Sigmoid colon (tissue), 7 donors: ENCODE measurements at regions of chr3 and their contacts with region 1.

Region 1: DNA sequence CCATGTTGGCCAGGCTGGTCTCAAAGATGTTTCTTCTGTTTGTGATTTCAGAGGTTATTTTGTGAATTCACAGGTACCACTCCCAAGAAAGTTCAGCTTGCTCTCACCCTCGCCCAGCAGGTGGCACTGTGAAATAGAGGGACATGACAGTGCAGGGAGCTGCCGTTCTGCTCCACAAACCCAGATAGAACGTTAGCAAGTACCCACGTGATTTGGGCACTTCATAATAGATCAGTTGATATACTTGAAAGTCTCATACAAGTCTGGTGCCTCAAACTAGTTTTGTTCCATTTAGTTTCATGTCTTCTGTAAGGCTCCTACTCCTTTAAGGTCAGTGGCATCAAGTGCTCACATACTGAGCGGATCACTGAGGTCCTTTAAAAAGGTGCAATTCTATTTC is 45.5 kb downstream of the FILIP1L start:
- DNase-seq: peak; percentile 85
- H3K4me3 ChIP-seq: no peak overlapping the region
- H3K27ac ChIP-seq: peak overlapping the region in 2 of 4 donors; percentile 22 to 50
- H3K4me1 ChIP-seq: peaks cover 0 to 27% (median 15%) of the 10 kb centered on the region in 4 donors
- H3K27me3 ChIP-seq: no peaks in the 10 kb centered on the region
- CTCF ChIP-seq: peak in 3 of 4 experiments; percentile 67
- EP300 ChIP-seq: no peak
- POLR2A ChIP-seq: no peak

Region 2: DNA sequence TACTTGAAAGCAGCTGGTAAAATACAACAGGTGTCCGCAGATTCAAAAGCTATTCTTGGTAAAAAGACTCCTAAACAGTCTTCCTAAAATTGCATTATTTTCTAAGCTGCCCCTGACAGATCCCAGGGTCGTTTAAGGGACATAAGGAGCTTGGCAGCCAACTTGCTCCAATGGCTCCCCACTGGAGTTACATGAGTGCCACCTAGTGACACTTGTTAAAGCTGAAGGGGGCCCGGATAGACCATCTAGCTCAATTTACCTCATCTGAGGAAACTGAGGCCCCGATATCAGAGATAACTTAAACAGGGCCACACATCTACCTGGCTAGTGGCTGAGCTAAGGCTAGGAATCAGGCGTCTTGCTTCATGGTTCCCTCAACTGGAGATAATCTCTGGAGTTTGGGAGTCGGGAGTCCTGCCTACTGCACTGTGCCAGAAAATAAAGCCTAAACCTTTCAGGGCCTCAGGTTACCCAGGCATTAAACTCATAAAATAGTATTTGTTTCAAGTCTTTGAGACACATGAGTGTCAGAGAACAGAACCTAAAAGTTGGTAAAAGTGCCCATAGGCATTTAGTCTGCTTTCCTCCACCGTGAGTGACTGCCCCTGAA is 185.4 kb after region 1 on chr3:
- intact Hi-C with region 1: loop called (anchors 2 kb)
- DNase-seq: peak; percentile 82
- H3K4me3 ChIP-seq: no peak overlapping the region
- H3K27ac ChIP-seq: peak overlapping the region; percentile 16 to 73 (median 58)
- H3K4me1 ChIP-seq: peaks cover 0 to 15% (median 13%) of the 10 kb centered on the region in 4 donors
- H3K27me3 ChIP-seq: no peaks in the 10 kb centered on the region
- CTCF ChIP-seq: peak; percentile 63 to 71 (median 68)
- EP300 ChIP-seq: no peak
- POLR2A ChIP-seq: no peak